Activated CD4-positive, alpha-beta T cell treated with anti-CD3 and anti-CD28 coated beads for 36 hours (primary cell): ENCODE measurements at regions of chr12 and their contacts with region 1.

Region 1: GRCh38 chr12:76031537-76032073 is at the start of gene PHLDA1:
- DNase-seq: peak; percentile 97
- ATAC-seq: peak; percentile 87
- H3K4me3 Mint-ChIP-seq: peak within 1 kb of the TSS; percentile 99
- H3K27ac Mint-ChIP-seq: peak within 1 kb of the TSS; percentile 96
- H3K4me1 Mint-ChIP-seq: peaks cover 37% of the 10 kb centered on the region
- H3K27me3 Mint-ChIP-seq: no peaks in the 10 kb centered on the region
- total RNA-seq, gene PHLDA1: 12.3 to 14.3 TPM

Region 2: DNA sequence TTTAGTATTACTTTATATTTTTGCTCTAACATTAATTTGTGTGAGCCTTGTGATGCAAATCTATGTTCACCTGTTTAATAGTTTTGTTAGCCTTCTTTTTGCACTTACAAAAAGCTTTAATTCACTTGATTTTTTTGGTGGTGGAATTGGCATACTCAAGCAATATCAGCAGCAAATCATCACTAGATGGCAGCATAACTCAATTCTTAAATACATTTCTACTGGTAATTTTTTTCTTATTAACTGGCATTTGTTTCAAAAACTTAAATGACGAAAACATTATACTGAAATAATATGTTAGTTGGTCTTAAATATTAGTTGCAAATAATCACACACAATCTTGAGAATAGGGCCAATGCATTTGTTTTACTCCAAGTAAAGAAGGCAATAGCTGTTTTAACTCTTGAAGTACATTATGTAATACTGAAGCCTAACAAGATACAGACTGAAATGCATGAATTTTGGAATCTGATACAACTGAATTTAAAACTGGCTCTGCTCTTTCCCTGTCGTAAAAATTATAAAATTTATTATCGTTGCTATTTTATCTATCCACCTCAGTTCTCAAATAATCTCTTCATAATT is 1342.4 kb before region 1 on chr12:
- CTCF ChIA-PET with region 1: no interaction called
- POLR2A ChIA-PET with region 1: no interaction called
- intact Hi-C with region 1: loop called in 1 of 2 experiments (anchors 5 kb)
- DNase-seq: no peak
- ATAC-seq: no peak
- H3K4me3 Mint-ChIP-seq: no peak overlapping the region
- H3K27ac Mint-ChIP-seq: no peak overlapping the region
- H3K4me1 Mint-ChIP-seq: no peaks in the 10 kb centered on the region
- H3K27me3 Mint-ChIP-seq: peaks cover 5% of the 10 kb centered on the region

Region 3: GRCh38 chr12:75511116-75512048 is 520.2 kb before region 1 on chr12 and contains the start of gene KRR1:
- CTCF ChIA-PET with region 1: interaction called, 7 read pairs
- POLR2A ChIA-PET with region 1: interaction called, 5 read pairs
- intact Hi-C with region 1: loop called (anchors 1 to 2 kb)
- DNase-seq: peak; percentile 94
- ATAC-seq: peak; percentile 96
- H3K4me3 Mint-ChIP-seq: peak within 1 kb of the TSS; percentile 100
- H3K27ac Mint-ChIP-seq: peak within 1 kb of the TSS; percentile 99
- H3K4me1 Mint-ChIP-seq: peaks cover 33% of the 10 kb centered on the region
- H3K27me3 Mint-ChIP-seq: no peaks in the 10 kb centered on the region
- total RNA-seq, gene KRR1: 122 to 147 TPM

Region 4: DNA sequence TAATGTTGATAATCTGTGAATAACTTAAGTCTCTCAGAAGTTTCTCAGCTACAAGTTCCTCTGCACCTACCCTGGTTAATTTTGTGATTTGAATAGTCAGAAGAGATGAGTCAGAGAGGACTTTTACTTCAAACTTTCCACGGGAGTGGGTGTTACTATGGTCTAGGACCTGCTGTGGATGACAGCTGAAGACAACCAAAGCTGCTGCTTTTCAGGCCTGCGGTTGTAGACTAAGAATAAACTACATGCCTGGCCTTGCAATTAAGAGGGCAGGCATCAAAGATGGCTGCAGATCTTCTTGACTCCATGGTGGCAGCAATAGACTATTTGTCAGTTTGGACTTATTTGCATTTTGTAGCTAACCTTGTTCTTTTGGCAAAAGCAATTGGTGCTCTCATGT is 293.1 kb before region 1 on chr12:
- CTCF ChIA-PET with region 1: no interaction called
- POLR2A ChIA-PET with region 1: no interaction called
- intact Hi-C with region 1: loop called in 1 of 2 experiments (anchors 2 kb)
- DNase-seq: peak; percentile 59
- ATAC-seq: peak; percentile 95
- H3K4me3 Mint-ChIP-seq: no peak overlapping the region
- H3K27ac Mint-ChIP-seq: no peak overlapping the region
- H3K4me1 Mint-ChIP-seq: peaks cover 16% of the 10 kb centered on the region
- H3K27me3 Mint-ChIP-seq: peaks cover 14% of the 10 kb centered on the region

Region 5: GRCh38 chr12:75944097-75944904 is 87.3 kb before region 1 on chr12:
- CTCF ChIA-PET with region 1: interaction called, 8 read pairs
- POLR2A ChIA-PET with region 1: interaction called, 8 read pairs
- intact Hi-C with region 1: loop called (anchors 1 kb)
- DNase-seq: peak; percentile 42
- ATAC-seq: peak; percentile 92
- H3K4me3 Mint-ChIP-seq: peak overlapping the region; percentile 37
- H3K27ac Mint-ChIP-seq: peak overlapping the region; percentile 90
- H3K4me1 Mint-ChIP-seq: peaks cover 31% of the 10 kb centered on the region
- H3K27me3 Mint-ChIP-seq: no peaks in the 10 kb centered on the region

Region 6: DNA sequence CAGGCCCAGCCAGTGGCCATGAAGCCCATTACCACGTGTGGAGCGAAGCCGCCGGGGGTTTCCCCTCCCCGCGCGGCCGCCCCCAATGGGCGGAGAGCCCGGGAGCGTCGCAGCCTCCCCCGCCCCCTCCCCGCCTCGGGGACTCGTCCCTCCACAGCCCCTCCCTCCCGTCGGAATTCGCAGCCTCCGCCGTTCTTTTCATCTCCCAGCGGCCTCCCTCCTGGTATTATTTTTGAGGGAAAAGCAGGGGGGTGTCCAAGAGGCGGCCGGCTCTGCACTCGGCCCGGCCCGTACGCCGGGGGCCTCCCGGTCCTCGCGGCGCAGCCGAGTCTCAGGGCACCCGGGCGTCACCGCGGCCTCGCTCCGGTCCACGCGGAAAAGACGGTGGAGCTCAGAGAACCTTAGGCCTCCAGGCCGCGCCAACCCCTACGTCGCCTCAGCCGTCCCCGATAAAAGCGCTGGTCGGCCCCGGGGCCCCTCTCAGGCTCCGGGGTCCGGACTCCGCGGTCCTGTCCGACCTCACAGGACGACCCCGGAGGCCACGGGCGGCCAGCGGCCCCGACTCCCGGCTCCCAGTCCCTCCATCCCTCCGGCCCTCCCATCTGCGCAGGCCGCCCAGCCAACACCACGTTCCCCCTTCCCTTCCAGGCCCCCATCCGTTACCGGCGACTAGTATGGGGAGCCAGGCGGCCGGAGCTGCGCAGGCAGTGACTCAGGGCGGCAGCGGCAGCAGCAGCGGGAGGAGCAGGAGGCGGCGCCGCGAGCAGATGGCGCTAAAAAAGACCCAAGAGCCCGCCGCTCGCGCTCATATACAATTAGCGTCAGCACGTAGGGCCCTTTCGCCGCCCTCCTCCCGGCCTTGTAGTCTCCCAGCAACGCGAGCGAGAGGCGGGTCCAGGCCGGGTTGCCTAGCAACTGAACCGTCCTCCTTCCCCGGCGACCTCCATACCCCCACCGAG is 52.6 kb after region 1 on chr12 and contains the start of gene NAP1L1:
- CTCF ChIA-PET with region 1: interaction called, 3 read pairs
- POLR2A ChIA-PET with region 1: interaction called, 8 read pairs
- intact Hi-C with region 1: loop called in 1 of 2 experiments (anchors 1 kb)
- DNase-seq: peak; percentile 98
- ATAC-seq: peak; percentile 86
- H3K4me3 Mint-ChIP-seq: peak within 1 kb of the TSS; percentile 79
- H3K27ac Mint-ChIP-seq: peak within 1 kb of the TSS; percentile 98
- H3K4me1 Mint-ChIP-seq: peaks cover 44% of the 10 kb centered on the region
- H3K27me3 Mint-ChIP-seq: no peaks in the 10 kb centered on the region
- total RNA-seq, gene NAP1L1: 959 to 1,004 TPM

Region 7: GRCh38 chr12:76470028-76470939 is 438.7 kb after region 1 on chr12:
- CTCF ChIA-PET with region 1: no interaction called
- POLR2A ChIA-PET with region 1: no interaction called
- intact Hi-C with region 1: no loop called
- DNase-seq: no peak
- ATAC-seq: peak; percentile 87
- H3K4me3 Mint-ChIP-seq: no peak overlapping the region
- H3K27ac Mint-ChIP-seq: no peak overlapping the region
- H3K4me1 Mint-ChIP-seq: peaks cover 10% of the 10 kb centered on the region
- H3K27me3 Mint-ChIP-seq: no peaks in the 10 kb centered on the region

Region 8: DNA sequence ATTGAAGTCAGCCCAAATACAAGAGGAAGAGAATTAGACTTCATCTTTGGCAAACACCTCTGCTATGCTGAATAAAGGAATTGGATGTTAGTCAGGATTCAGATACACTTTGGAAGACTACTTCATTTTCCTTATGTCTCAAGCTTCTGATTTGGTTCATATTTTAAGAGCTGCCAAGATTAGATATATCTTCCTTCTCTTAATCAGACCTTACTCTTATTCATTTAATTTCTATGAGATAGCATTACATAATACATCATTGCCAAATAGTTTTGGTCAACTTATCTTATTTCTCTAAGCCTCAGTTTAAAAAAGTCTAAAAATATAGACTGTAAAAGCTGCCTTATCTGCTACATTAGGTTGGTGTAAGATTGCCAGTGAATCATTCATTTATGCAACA is 1468.5 kb after region 1 on chr12:
- CTCF ChIA-PET with region 1: no interaction called
- POLR2A ChIA-PET with region 1: no interaction called
- intact Hi-C with region 1: no loop called
- DNase-seq: no peak
- ATAC-seq: no peak
- H3K4me3 Mint-ChIP-seq: no peak overlapping the region
- H3K27ac Mint-ChIP-seq: no peak overlapping the region
- H3K4me1 Mint-ChIP-seq: no peaks in the 10 kb centered on the region
- H3K27me3 Mint-ChIP-seq: no peaks in the 10 kb centered on the region